ENCODE measurements at regions of chr11 and their contacts with region 1.

Region 1: DNA sequence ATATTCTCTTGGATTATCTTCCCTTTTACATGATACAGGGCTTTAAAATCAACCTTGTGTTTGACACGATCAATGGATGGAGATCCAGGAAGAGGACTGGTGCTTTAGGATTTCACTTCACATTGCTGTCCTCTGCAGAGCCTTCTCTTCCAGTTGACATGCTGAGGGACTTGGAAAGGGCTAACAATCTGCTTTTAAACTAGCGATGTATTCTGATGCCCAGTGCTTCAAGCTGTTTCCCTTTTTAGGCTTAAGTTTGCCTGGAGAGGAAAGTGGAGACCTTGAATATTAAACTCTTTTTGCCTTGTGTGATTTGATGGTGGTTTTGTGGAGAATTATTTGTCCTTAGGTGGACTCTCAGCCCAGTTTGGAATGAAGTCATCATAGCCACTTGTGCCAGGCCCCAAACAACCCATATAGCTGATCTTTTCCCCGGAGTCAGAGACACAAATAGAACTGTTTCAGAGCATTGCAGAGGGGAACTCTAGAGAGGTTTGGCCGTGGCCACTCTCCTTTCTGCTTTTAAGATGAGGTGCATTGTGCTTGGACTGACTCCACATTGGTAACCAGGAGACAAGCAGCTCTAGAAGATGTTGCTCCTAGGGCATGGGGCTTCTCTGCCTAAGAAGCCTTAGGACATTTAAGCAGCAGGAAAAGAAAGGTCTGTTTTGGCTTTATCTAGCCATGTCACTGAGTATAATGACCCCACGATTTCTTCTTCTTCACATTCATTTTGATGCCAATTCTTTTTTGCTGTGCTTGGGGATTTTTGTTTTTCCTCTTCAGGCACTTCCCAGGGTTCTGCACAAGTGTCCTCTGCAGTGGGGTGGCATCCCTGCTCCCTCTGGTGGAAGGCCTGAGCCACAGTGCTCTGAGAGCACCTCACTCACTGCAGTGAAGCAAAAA is 152.8 kb downstream of the NCAM1 start:
- DNase-seq: peak; percentile 3
- ATAC-seq: peak; percentile 97
- H3K4me3 ChIP-seq: no peak overlapping the region
- H3K27ac ChIP-seq: no peak overlapping the region
- H3K4me1 ChIP-seq: no peaks in the 10 kb centered on the region
- H3K27me3 ChIP-seq: 0 out of 5 replicates have a peak, but pooled peaks cover 0 to 2% of the 10 kb centered on the region in 2 experiments
- CTCF ChIP-seq: peak; percentile 61
- EP300 ChIP-seq: no peak
- POLR2A ChIP-seq: no peak
- RAD21 ChIP-seq: no peak

Region 2: GRCh38 chr11:112588252-112588694 is 525.8 kb before region 1 on chr11:
- CTCF ChIA-PET with region 1: no interaction called
- POLR2A ChIA-PET with region 1: no interaction called
- in situ Hi-C with region 1: loop called (anchors 10 kb)
- intact Hi-C with region 1: no loop called
- DNase-seq: peak; percentile 71
- ATAC-seq: peak; percentile 94
- H3K4me3 ChIP-seq: no peak overlapping the region
- H3K27ac ChIP-seq: no peak overlapping the region
- H3K4me1 ChIP-seq: no peaks in the 10 kb centered on the region
- H3K27me3 ChIP-seq: no peaks in the 10 kb centered on the region
- CTCF ChIP-seq: peak; percentile 77
- EP300 ChIP-seq: no peak
- POLR2A ChIP-seq: no peak
- RAD21 ChIP-seq: peak; percentile 71

Region 3: GRCh38 chr11:112795142-112795815 is 318.8 kb before region 1 on chr11:
- CTCF ChIA-PET with region 1: no interaction called
- POLR2A ChIA-PET with region 1: no interaction called
- in situ Hi-C with region 1: no loop called
- intact Hi-C with region 1: loop called (anchors 10 kb)
- DNase-seq: peak; percentile 19
- ATAC-seq: peak; percentile 93
- H3K4me3 ChIP-seq: no peak overlapping the region
- H3K27ac ChIP-seq: no peak overlapping the region
- H3K4me1 ChIP-seq: no peaks in the 10 kb centered on the region
- H3K27me3 ChIP-seq: no peaks in the 10 kb centered on the region; a peak in 1 of 5 replicates
- CTCF ChIP-seq: peak; percentile 63
- EP300 ChIP-seq: no peak
- POLR2A ChIP-seq: no peak
- RAD21 ChIP-seq: no peak